ENCODE measurements at regions of chr2 and their contacts with region 1.

Region 1: DNA sequence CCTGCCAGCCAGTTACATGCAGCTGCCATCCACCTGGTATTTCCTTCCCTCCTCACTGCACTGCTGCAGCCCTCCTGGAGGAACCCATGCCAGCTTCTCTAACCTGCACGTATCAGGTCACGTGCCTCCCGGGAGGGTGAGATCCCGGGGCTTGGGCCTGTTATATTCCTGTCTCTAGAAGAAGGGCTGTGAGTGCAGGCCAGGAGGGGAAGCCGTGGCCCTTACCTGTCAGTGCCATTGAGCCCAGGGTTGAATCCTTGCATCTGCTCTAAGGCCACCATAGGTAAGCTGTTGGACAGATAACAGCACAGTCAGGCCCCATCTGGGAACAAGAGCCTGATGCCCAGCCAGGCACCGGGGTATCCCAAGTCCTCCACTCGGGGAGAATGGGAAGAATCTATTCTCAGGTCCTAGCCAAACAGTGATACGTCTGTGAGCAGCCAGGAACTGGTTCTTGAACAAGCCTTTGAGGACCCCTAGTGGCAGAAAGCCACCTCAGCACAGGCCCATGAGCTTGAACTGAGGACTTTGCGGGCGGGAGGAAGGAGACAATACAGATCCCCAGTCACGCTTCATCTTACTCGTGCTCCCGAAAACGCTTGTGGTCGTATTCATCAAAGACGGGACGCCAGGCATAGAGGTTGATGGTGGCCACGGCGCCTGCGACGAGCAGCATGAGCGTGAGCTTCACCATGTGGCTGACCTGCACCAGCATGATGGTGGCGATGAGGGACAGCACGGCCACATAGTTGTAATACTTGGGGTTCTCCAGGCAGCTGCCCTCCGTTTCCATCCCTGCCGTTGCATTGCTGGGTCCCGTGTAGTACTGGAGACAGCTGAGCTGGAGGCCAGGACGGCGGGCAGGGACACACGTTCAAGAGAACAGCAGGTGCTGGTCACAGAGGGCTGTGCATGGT is 34.4 kb downstream of the CENPO start:
- DNase-seq: peak; percentile 72 to 82 (median 74)
- ATAC-seq: peak; percentile 93 to 97 (median 95)
- H3K4me3 ChIP-seq: no peak overlapping the region
- H3K27ac ChIP-seq: no peak overlapping the region
- H3K4me1 ChIP-seq: peaks cover 0 to 4% (median 0%) of the 10 kb centered on the region in 4 donors
- H3K27me3 ChIP-seq: no peaks in the 10 kb centered on the region
- CTCF ChIP-seq: peak; percentile 85 to 95 (median 92)
- POLR2A ChIP-seq: no peak

Region 2: DNA sequence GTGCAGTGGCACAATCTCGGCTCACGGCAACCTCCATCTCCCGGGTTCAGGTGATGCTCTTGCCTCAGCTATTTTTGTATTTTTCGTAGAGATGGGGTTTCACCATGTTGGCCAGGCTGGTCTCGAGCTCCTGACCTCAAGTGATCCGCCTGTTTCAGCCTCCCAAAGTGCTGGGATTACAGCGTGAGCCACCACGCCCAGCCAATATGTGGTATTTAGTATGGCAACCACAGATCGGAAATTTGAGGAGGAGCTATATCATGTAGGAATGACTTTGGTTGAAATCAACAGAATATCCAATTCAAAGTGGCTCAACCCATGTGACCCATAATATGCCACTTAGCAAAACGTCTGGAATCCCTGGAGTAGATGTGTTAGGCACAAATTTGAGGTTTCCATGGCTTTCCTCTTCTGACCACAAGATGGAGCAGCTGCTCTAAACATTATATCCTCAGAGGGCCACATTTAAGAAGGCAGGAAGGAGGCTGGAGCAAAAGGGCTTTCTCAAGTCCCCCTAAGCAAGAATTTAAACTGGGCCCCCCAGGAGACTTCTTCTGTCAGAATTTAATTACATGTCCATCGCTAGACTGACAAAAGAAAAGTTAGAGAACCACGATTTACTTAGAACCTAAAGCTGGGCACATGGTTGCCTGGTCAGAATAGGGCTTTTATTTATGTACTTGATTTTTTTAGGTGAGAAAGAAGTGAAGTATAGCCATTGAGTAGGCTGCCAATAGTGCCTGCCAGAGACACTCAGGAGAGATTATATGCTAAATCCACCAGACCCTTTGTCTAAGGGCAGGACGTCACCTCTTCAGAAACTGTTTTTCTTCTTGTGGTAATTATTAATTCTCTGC is 417.7 kb before region 1 on chr2:
- intact Hi-C with region 1: loop called (anchors 5 to 10 kb)
- DNase-seq: no peak
- ATAC-seq: peak; percentile 88 to 95 (median 92)
- H3K4me3 ChIP-seq: no peak overlapping the region
- H3K27ac ChIP-seq: no peak overlapping the region
- H3K4me1 ChIP-seq: no peaks in the 10 kb centered on the region
- H3K27me3 ChIP-seq: no peaks in the 10 kb centered on the region
- CTCF ChIP-seq: peak; percentile 74 to 87 (median 82)
- POLR2A ChIP-seq: no peak

Measured in right lobe of liver (tissue), 6 donors.